ENCODE measurements at regions of chr20 and their contacts with region 1.

Region 1: DNA sequence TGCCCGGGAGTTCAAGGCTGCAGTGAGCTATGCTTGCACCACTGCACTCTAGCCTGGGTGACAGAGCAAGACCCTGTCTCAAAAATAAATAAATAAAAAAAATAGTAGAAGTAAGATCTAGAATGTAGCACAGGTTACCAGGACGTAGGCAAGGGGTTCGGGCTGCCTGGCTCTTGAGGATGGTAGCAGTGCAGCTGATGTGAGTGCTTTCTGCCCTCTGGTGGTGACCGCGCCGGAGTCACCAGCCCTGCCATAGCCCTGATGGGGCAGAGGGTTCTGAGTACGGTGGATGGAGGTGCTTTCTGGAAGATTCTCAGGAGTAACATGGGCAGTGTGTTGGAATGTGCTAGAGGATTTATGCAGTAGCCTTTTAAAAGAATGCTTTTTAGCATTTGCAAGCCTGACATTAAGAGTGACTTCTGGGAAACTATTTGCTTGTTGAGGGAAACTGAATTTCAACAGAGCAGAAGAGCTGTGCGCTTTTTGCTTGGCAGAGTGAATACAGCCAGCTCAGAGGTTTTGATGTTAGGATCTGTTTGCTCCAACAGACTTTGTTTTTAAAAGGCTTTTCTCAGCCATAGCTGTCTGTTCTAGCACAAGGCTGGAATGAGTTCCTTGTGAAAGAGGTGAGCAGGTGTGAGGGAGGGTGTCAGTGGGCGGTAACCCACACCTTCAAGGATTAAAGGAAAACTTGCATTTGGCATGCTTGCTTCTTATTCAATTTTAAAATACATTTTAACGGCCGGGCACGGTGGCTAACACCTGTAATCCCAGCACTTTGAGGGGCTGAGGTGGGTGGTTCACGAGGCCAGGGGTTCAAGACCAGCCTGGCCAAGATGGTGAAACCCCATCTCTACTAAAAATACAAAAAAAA is 65.9 kb downstream of the PTPN1 start:
- DNase-seq: peak in 1 of 2 experiments; percentile 74
- H3K4me3 ChIP-seq: no peak overlapping the region
- H3K27ac ChIP-seq: no peak overlapping the region
- H3K4me1 ChIP-seq: no peaks in the 10 kb centered on the region
- H3K27me3 ChIP-seq: no peaks in the 10 kb centered on the region
- CTCF ChIP-seq: peak; percentile 79 to 95 (median 90)
- EP300 ChIP-seq: no peak
- POLR2A ChIP-seq: no peak
- RAD21 ChIP-seq: peak; percentile 75 to 82

Region 2: GRCh38 chr20:50372776-50373167 is 203.3 kb before region 1 on chr20:
- CTCF ChIA-PET with region 1: no interaction called
- POLR2A ChIA-PET with region 1: no interaction called
- DNase-seq: no peak
- H3K4me3 ChIP-seq: no peak overlapping the region
- H3K27ac ChIP-seq: no peak overlapping the region
- H3K4me1 ChIP-seq: peaks cover 0 to 3% (median 0%) of the 10 kb centered on the region in 4 experiments; a peak in 2 of 7 replicates
- H3K27me3 ChIP-seq: no peaks in the 10 kb centered on the region
- CTCF ChIP-seq: no peak
- EP300 ChIP-seq: no peak
- POLR2A ChIP-seq: no peak
- RAD21 ChIP-seq: no peak

Region 3: GRCh38 chr20:50460460-50461267 is 115.4 kb before region 1 on chr20:
- CTCF ChIA-PET with region 1: interaction called, 12 read pairs
- POLR2A ChIA-PET with region 1: no interaction called
- DNase-seq: peak in 1 of 2 experiments; percentile 99
- H3K4me3 ChIP-seq: no peak overlapping the region
- H3K27ac ChIP-seq: no peak overlapping the region
- H3K4me1 ChIP-seq: peaks cover 0 to 8% (median 2%) of the 10 kb centered on the region in 4 experiments; a peak in 5 of 7 replicates
- H3K27me3 ChIP-seq: no peaks in the 10 kb centered on the region
- CTCF ChIP-seq: peak; percentile 92 to 95 (median 93)
- EP300 ChIP-seq: no peak
- POLR2A ChIP-seq: no peak
- RAD21 ChIP-seq: peak; percentile 91

Region 4: GRCh38 chr20:50484276-50484976 is 91.7 kb before region 1 on chr20:
- CTCF ChIA-PET with region 1: interaction called, 36 read pairs
- POLR2A ChIA-PET with region 1: no interaction called
- DNase-seq: no peak
- H3K4me3 ChIP-seq: no peak overlapping the region
- H3K27ac ChIP-seq: no peak overlapping the region
- H3K4me1 ChIP-seq: no peaks in the 10 kb centered on the region
- H3K27me3 ChIP-seq: no peaks in the 10 kb centered on the region
- CTCF ChIP-seq: no peak
- EP300 ChIP-seq: no peak
- POLR2A ChIP-seq: no peak
- RAD21 ChIP-seq: no peak

Region 5: DNA sequence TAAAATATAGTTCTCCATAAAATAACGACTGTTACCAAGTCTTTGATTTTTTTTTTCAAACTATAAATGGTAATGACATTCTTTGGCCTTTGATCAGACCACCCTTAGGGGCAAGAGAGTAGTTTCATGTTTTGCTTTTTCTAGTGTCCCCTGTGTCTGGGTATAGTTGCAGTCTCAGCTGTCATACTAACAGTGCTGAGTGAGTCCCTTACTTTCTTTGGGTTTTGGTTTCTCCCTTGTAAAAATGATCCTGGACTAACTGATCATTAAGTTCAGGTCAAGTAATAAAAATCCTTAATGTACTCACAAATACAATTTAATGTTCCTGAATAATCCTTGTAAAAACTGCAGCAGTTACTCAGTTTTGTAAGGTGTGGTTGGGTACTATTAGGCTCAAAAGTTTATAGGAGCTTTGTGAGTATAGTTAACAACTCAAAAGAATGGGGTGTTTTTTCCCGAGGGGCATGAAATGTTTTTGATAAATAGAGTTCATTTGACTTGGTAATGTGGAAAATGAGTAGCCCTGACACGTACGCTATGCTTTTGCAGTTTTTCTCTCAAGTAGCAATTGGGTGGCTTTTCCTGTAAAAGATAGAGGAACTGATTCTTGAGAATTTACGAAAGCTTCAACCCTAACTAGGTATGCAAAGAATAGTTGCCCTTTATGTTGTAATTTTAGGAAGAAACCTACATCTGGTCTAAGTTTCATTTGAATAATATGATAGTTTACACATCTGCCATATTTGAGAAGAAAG is 59.7 kb before region 1 on chr20:
- CTCF ChIA-PET with region 1: interaction called, 19 read pairs
- POLR2A ChIA-PET with region 1: no interaction called
- DNase-seq: no peak
- H3K4me3 ChIP-seq: no peak overlapping the region
- H3K27ac ChIP-seq: no peak overlapping the region
- H3K4me1 ChIP-seq: peaks cover 0 to under 1% (median 0%) of the 10 kb centered on the region in 4 experiments; a peak in 3 of 7 replicates
- H3K27me3 ChIP-seq: no peaks in the 10 kb centered on the region
- CTCF ChIP-seq: no peak
- EP300 ChIP-seq: no peak
- POLR2A ChIP-seq: no peak
- RAD21 ChIP-seq: no peak

Region 6: DNA sequence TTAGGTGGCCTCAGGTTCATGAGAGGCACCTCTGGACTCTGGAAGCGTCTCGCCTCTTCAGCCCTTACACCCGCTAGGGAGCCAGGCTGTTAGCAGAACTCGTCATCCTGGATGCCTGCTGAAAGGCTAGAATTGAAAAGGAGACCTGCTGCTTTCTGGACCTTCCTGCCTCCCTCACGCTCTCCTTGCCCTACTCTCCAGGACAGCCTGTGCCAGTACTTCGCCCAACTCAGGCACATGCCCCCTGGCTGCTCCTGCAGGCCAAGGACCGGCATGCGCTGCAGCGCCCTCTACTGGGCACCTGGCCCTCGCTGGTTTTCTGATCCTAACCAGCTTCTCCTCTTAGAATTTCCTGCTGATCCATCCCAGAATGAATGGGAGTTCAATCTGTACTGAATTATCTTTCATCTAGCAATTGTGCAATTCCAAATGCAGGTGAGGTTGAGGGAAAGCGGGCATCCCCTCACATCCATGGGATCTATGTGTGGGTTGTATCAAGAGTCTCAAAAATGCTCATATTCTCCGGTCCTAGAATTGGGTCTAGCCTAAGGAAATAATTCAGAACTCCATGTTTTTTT is 12.0 kb after region 1 on chr20:
- CTCF ChIA-PET with region 1: interaction called, 12 read pairs
- POLR2A ChIA-PET with region 1: no interaction called
- DNase-seq: peak in 1 of 2 experiments; percentile 99
- H3K4me3 ChIP-seq: no peak overlapping the region
- H3K27ac ChIP-seq: no peak overlapping the region
- H3K4me1 ChIP-seq: no peaks in the 10 kb centered on the region
- H3K27me3 ChIP-seq: no peaks in the 10 kb centered on the region
- CTCF ChIP-seq: peak; percentile 99
- EP300 ChIP-seq: no peak
- POLR2A ChIP-seq: no peak
- RAD21 ChIP-seq: peak; percentile 64 to 75

Region 7: GRCh38 chr20:50613438-50614169 is 37.5 kb after region 1 on chr20:
- CTCF ChIA-PET with region 1: no interaction called
- POLR2A ChIA-PET with region 1: no interaction called
- DNase-seq: no peak
- H3K4me3 ChIP-seq: no peak overlapping the region
- H3K27ac ChIP-seq: no peak overlapping the region
- H3K4me1 ChIP-seq: peaks cover 0 to 8% (median 2%) of the 10 kb centered on the region in 4 experiments; a peak in 3 of 7 replicates
- H3K27me3 ChIP-seq: no peaks in the 10 kb centered on the region
- CTCF ChIP-seq: no peak
- EP300 ChIP-seq: no peak
- POLR2A ChIP-seq: no peak
- RAD21 ChIP-seq: no peak

Region 8: DNA sequence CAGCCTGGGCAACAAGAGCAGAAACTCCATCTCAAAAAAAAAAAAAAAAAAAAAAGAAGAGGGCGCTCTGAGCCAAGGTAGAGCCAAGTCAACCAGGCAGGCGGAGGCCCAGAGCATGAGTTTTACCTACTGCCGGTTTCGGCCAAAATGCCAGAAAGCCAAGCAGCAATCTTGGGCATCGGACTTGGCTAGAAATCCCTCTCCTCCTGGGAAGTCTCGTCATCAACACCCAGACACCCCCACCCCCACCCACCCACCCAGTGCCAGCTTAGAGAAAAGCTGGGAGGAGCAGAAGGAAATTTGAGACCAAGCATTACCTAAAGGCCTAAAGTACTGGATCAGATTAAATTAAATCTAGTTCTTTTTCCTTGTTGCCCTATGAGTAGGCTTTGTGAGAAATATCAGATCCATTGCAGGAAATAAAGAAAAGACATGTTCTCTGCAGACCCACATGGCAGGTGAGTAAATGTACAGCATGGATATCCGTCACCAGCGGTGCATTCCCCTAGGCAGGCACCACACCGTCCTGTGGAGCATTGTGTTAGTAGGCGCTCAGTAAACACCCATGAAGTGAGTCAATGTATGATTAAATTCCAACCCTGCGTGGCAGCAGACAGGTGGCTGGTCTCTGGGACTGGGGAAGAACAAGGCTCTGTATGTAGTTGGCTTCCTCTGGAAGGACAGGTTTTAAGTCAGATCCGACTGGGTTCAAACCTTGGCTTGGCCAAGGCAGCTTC is 94.2 kb after region 1 on chr20:
- CTCF ChIA-PET with region 1: no interaction called
- POLR2A ChIA-PET with region 1: no interaction called
- DNase-seq: no peak
- H3K4me3 ChIP-seq: no peak overlapping the region
- H3K27ac ChIP-seq: no peak overlapping the region; the same call in 1 of the 2 replicates
- H3K4me1 ChIP-seq: peaks cover 0 to 3% (median 0%) of the 10 kb centered on the region in 4 experiments; a peak in 1 of 7 replicates
- H3K27me3 ChIP-seq: no peaks in the 10 kb centered on the region
- CTCF ChIP-seq: no peak
- EP300 ChIP-seq: no peak
- POLR2A ChIP-seq: no peak
- RAD21 ChIP-seq: peak; percentile 21 to 25; a peak in 2 of 4 replicates